Activated CD4-positive, alpha-beta memory T cell treated with anti-CD3 and anti-CD28 coated beads for 36 hours (primary cell): ENCODE measurements at regions of chr3 and their contacts with region 1.

Region 1: DNA sequence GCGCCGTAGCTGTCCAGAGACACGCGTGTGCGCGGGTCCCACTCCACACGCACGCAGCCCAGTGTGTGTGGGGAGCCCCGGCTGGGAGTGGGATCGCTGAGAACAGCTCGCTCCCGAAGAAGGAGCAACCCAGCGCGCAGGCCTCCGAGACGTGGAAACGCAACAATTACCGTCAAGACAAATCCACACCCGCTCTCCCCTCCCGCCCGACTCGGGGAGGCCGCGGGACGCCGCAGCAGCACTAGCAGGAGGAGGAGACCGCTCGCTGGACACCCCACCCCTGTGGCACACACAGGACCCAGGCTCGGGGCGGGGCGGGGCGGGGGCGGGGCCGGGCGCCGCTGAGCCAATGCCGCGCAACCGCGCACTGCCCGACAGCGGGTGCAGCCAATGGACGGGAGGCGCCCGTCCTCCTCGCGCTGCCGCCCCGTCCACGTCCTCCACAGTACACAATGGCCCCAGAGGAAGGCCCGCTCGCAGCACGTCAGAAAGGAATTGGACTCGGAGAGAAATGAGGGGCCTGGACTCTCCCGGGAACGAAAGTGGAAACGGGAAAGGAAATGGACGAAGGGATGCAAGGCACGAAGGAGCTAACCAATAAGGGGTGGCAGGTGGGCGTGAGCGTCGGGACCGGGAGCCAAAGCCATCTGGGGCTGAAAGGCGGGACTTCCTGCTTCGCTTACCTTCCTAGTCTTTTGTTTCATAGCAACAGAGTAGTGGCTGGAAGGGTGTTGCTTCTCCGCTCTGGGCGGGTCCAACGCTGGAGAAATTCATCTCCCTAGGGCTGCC is at the start of gene CBLB:
- DNase-seq: peak; percentile 91
- H3K4me3 Mint-ChIP-seq: peak within 1 kb of the TSS; percentile 94
- H3K27ac Mint-ChIP-seq: peak within 1 kb of the TSS; percentile 94
- H3K4me1 Mint-ChIP-seq: peaks cover 38% of the 10 kb centered on the region
- H3K27me3 Mint-ChIP-seq: no peaks in the 10 kb centered on the region
- total RNA-seq, gene CBLB: 86.1 to 88.2 TPM

Region 2: DNA sequence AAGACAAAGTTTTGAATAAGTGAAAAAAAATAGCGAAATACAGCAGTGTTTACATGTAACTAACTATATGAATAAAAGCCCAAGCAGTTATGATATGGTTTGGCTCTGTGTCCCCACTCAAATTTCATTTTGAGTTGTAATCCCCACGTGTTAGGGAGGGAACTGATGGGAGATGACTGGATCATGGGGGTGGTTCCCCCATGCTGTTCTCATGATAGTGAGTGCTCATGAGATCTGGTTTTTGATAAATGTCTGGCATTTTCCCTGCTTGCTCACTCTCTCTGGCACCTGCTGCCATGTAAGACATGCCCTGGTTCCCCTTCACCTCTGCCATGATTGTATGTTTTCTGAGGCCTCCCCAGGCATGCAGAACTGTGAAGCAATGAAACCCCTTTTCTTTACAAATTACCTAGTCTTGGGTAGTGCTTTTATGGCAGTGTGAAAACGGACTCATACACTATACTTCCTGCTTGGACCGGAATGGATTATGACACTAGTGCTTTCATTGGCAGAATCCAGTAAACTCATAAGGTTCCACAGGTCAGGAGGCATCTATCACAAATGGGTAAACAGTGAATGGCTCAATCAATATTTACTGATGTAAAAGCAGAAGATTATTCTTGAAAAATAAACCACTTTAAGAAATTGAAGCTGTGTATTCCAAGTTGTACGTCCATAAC is 192.2 kb before region 1 on chr3:
- CTCF ChIA-PET with region 1: no interaction called
- POLR2A ChIA-PET with region 1: no interaction called
- intact Hi-C with region 1: loop called (anchors 2 kb)
- DNase-seq: peak; percentile 77
- H3K4me3 Mint-ChIP-seq: no peak overlapping the region
- H3K27ac Mint-ChIP-seq: peak overlapping the region; percentile 86
- H3K4me1 Mint-ChIP-seq: peaks cover 9% of the 10 kb centered on the region
- H3K27me3 Mint-ChIP-seq: no peaks in the 10 kb centered on the region

Region 3: GRCh38 chr3:105747060-105747541 is 121.8 kb before region 1 on chr3:
- CTCF ChIA-PET with region 1: no interaction called
- POLR2A ChIA-PET with region 1: no interaction called
- intact Hi-C with region 1: loop called (anchors 2 kb)
- DNase-seq: no peak
- H3K4me3 Mint-ChIP-seq: no peak overlapping the region
- H3K27ac Mint-ChIP-seq: peak overlapping the region; percentile 57
- H3K4me1 Mint-ChIP-seq: peaks cover 68% of the 10 kb centered on the region
- H3K27me3 Mint-ChIP-seq: no peaks in the 10 kb centered on the region

Region 4: GRCh38 chr3:105984837-105985236 is 115.9 kb after region 1 on chr3:
- CTCF ChIA-PET with region 1: no interaction called
- POLR2A ChIA-PET with region 1: no interaction called
- intact Hi-C with region 1: loop called (anchors 5 kb)
- DNase-seq: no peak
- H3K4me3 Mint-ChIP-seq: no peak overlapping the region
- H3K27ac Mint-ChIP-seq: no peak overlapping the region
- H3K4me1 Mint-ChIP-seq: peaks cover 25% of the 10 kb centered on the region
- H3K27me3 Mint-ChIP-seq: no peaks in the 10 kb centered on the region

Region 5: DNA sequence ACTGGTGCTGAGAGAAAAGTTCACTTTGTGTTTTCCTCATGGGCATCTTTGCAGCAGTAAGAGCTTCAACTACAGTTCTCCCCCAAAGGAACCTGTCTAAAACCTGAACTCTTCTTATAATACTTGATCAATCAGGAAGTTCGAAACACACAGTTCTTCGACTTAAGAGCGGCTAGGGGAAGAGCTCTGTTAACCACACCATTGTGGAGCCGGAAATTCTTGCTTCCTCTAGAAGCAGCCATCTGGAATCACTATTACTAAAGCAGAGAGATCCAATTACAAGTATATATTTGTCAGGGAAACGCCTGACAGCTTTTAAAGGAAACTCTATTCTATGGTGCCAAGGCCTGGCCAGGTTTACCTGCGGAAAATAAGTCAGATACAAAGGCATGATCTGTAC is 337.2 kb after region 1 on chr3:
- CTCF ChIA-PET with region 1: no interaction called
- POLR2A ChIA-PET with region 1: interaction called, 3 read pairs
- intact Hi-C with region 1: loop called (anchors 2 kb)
- DNase-seq: peak; percentile 24
- H3K4me3 Mint-ChIP-seq: peak overlapping the region; percentile 9
- H3K27ac Mint-ChIP-seq: peak overlapping the region; percentile 93
- H3K4me1 Mint-ChIP-seq: peaks cover 48% of the 10 kb centered on the region
- H3K27me3 Mint-ChIP-seq: no peaks in the 10 kb centered on the region